Mammary epithelial cell (primary cell): ENCODE measurements at regions of chr9 and their contacts with region 1.

Region 1: GRCh38 chr9:115117999-115118878 is at the start of gene TNC:
- DNase-seq: peak; percentile 92
- H3K4me3 ChIP-seq: peak within 1 kb of the TSS; percentile 24 to 61 (median 58)
- H3K27ac ChIP-seq: peak within 1 kb of the TSS; percentile 83
- H3K4me1 ChIP-seq: peaks cover 65% of the 10 kb centered on the region
- H3K27me3 ChIP-seq: no peaks in the 10 kb centered on the region
- CTCF ChIP-seq: no peak
- total RNA-seq, gene TNC: 85.8 to 178 TPM

Region 2: DNA sequence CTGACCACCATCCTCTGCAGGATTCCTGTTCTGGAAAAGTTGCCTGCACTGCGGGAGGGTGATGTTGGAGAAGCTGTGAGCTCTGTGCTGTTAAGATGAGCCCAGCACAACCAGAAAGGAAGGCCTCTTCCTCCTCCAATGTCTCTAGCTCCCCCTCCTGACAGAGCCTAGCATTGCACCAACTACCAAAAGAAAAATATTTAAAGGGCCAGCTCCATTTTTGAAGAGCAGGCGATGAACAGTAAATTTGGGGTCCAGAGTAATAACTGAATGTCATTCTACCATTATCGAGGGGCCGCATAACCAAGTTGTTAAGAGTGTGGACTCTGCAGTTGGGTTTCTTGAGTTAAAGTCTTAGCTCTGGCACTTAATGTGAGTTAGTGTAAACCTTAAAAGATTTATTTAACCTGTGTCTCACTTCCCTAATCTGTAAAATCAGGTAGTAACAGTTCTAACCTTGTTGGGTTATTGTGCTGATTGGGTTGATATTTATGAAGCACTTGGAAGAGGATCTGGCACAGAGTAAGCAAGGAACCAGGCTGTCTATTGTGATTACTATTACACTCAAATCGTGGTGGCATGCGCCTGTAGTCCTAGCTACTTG is 464.6 kb before region 1 on chr9:
- CTCF ChIA-PET with region 1: no interaction called
- dilution Hi-C with region 1: no loop called
- in situ Hi-C with region 1: no loop called
- intact Hi-C with region 1: no loop called
- DNase-seq: peak; percentile 60
- H3K4me3 ChIP-seq: no peak overlapping the region
- H3K27ac ChIP-seq: no peak overlapping the region
- H3K4me1 ChIP-seq: peaks cover 3% of the 10 kb centered on the region
- H3K27me3 ChIP-seq: no peaks in the 10 kb centered on the region
- CTCF ChIP-seq: peak; percentile 89 to 97

Region 3: GRCh38 chr9:114738581-114739316 is 379.5 kb before region 1 on chr9:
- CTCF ChIA-PET with region 1: no interaction called
- dilution Hi-C with region 1: no loop called
- in situ Hi-C with region 1: no loop called
- intact Hi-C with region 1: loop called (anchors 5 kb)
- DNase-seq: peak; percentile 78
- H3K4me3 ChIP-seq: no peak overlapping the region
- H3K27ac ChIP-seq: no peak overlapping the region
- H3K4me1 ChIP-seq: peaks cover 5% of the 10 kb centered on the region
- H3K27me3 ChIP-seq: no peaks in the 10 kb centered on the region
- CTCF ChIP-seq: peak; percentile 71 to 81

Region 4: GRCh38 chr9:115035841-115036612 is 82.2 kb before region 1 on chr9:
- CTCF ChIA-PET with region 1: no interaction called
- dilution Hi-C with region 1: no loop called
- in situ Hi-C with region 1: no loop called
- intact Hi-C with region 1: loop called (anchors 1 kb)
- DNase-seq: peak; percentile 99
- H3K4me3 ChIP-seq: no peak overlapping the region
- H3K27ac ChIP-seq: peak overlapping the region; percentile 99
- H3K4me1 ChIP-seq: peaks cover 34% of the 10 kb centered on the region
- H3K27me3 ChIP-seq: no peaks in the 10 kb centered on the region
- CTCF ChIP-seq: no peak

Region 5: GRCh38 chr9:115157245-115157674 is 39.0 kb after region 1 on chr9:
- CTCF ChIA-PET with region 1: no interaction called
- dilution Hi-C with region 1: loop called (anchors 5 kb)
- in situ Hi-C with region 1: no loop called
- intact Hi-C with region 1: no loop called
- DNase-seq: peak; percentile 83
- H3K4me3 ChIP-seq: no peak overlapping the region
- H3K27ac ChIP-seq: peak overlapping the region; percentile 51
- H3K4me1 ChIP-seq: peaks cover 17% of the 10 kb centered on the region
- H3K27me3 ChIP-seq: no peaks in the 10 kb centered on the region
- CTCF ChIP-seq: no peak

Region 6: DNA sequence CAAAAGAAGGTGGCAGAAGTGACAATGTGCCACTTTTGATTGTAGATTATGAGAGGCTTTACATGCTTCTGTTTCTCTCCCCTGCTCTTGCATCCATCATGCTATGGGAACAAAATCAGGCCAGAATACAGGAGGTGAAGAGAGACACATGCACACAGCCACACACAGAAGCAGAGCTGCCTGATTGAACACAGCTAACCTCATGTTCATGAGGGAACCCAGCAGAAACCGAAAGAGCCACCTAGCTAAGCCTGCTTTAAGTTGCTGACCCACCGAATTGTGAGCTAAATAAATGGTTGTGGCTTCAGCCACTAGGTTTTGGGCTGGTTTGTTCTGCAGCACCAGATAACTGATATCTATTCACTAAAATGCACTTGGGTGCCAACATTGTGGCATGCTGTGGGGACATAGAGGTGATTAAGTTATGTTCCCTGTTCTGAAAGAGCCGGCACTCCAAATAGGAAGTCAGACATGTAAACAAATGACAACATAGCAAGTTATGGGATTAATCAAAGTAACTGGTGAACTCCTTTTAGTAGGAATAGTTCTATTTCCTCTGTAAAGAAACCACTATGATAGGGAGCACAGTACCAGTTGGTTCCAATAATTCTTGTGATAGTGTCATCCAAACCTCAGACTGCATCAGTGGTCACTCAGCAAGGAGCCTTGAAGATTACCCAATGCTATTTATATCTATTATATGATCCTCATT is 93.3 kb after region 1 on chr9:
- CTCF ChIA-PET with region 1: no interaction called
- dilution Hi-C with region 1: no loop called
- in situ Hi-C with region 1: no loop called
- intact Hi-C with region 1: loop called (anchors 1 kb)
- DNase-seq: no peak
- H3K4me3 ChIP-seq: no peak overlapping the region
- H3K27ac ChIP-seq: no peak overlapping the region
- H3K4me1 ChIP-seq: peaks cover 40% of the 10 kb centered on the region
- H3K27me3 ChIP-seq: no peaks in the 10 kb centered on the region
- CTCF ChIP-seq: no peak

Region 7: DNA sequence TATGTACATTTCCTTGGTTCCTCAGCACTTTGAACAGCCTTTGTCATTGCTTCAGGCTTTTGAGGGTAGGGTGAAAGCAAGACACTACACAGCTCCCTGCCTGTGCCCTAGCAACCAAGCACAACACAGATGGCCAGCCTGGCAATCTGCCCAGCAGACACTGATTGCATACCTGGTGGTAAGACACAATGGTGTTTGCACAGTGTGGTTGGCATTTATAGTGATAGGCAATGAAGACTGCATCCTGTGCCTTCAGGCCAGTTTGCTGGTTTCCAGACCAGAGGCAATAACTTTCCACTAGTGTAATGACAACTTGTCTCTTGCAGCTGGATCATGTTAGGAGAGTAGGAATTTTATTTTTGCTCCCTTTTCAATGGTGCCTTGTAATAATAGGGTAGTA is 144.2 kb after region 1 on chr9:
- CTCF ChIA-PET with region 1: no interaction called
- dilution Hi-C with region 1: loop called (anchors 5 kb)
- in situ Hi-C with region 1: no loop called
- intact Hi-C with region 1: loop called (anchors 1 kb)
- DNase-seq: peak; percentile 100
- H3K4me3 ChIP-seq: no peak overlapping the region
- H3K27ac ChIP-seq: peak overlapping the region; percentile 100
- H3K4me1 ChIP-seq: peaks cover 41% of the 10 kb centered on the region
- H3K27me3 ChIP-seq: no peaks in the 10 kb centered on the region
- CTCF ChIP-seq: no peak

Region 8: DNA sequence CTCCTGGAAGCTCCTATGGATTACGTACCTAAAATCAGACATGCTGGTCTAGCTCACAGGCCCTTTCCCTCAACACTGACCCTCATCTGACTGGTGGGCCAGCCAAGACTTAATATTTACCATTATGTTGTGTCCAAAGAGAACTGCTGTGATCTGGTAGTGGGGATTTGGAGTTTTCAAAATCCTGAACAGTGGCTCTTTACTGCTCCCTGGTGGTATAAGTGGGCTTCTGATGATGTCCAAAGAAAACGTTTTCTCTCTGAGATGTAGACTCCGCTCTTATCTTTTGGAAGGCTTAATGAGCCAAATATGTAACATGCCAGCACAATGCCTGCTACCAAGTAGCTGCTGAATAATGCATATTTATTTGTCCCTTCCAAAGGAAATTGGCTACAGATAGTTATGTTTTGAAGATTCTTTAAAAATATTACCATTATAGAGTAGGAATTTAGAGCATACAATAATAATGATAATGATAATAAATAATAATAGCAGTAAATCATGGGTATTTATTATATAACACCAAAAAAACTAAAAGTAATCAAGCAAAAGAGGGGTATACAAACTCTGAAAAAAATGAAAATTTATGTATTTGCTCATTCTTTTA is 406.3 kb after region 1 on chr9:
- CTCF ChIA-PET with region 1: no interaction called
- dilution Hi-C with region 1: no loop called
- in situ Hi-C with region 1: no loop called
- intact Hi-C with region 1: loop called (anchors 1 kb)
- DNase-seq: peak; percentile 60
- H3K4me3 ChIP-seq: no peak overlapping the region
- H3K27ac ChIP-seq: no peak overlapping the region
- H3K4me1 ChIP-seq: no peaks in the 10 kb centered on the region
- H3K27me3 ChIP-seq: no peaks in the 10 kb centered on the region
- CTCF ChIP-seq: peak; percentile 69 to 80

Region 9: GRCh38 chr9:115548609-115549260 is 430.5 kb after region 1 on chr9:
- CTCF ChIA-PET with region 1: no interaction called
- dilution Hi-C with region 1: no loop called
- in situ Hi-C with region 1: no loop called
- intact Hi-C with region 1: no loop called
- DNase-seq: no peak
- H3K4me3 ChIP-seq: no peak overlapping the region
- H3K27ac ChIP-seq: no peak overlapping the region
- H3K4me1 ChIP-seq: no peaks in the 10 kb centered on the region
- H3K27me3 ChIP-seq: peaks cover 2% of the 10 kb centered on the region
- CTCF ChIP-seq: no peak